Naive thymus-derived CD4-positive, alpha-beta T cell (primary cell): ENCODE measurements at regions of chr3 and their contacts with region 1.

Region 1: GRCh38 chr3:128617557-128618397 is 32.8 kb downstream of the RPN1 start:
- DNase-seq: peak; percentile 94 to 100 (median 99)
- ATAC-seq: peak; percentile 96
- H3K4me3 ChIP-seq: peak overlapping the region; percentile 99
- H3K4me3 Mint-ChIP-seq: peak overlapping the region; percentile 94 to 99 (median 97)
- H3K27ac ChIP-seq: peak overlapping the region; percentile 88
- H3K27ac Mint-ChIP-seq: peak overlapping the region; percentile 92 to 98 (median 97)
- H3K4me1 ChIP-seq: peaks cover 16 to 19% of the 10 kb centered on the region in 2 donors
- H3K4me1 Mint-ChIP-seq: peaks cover 10 to 36% (median 33%) of the 10 kb centered on the region in 7 donors
- H3K27me3 ChIP-seq: no peaks in the 10 kb centered on the region
- H3K27me3 Mint-ChIP-seq: no peaks in the 10 kb centered on the region

Region 2: DNA sequence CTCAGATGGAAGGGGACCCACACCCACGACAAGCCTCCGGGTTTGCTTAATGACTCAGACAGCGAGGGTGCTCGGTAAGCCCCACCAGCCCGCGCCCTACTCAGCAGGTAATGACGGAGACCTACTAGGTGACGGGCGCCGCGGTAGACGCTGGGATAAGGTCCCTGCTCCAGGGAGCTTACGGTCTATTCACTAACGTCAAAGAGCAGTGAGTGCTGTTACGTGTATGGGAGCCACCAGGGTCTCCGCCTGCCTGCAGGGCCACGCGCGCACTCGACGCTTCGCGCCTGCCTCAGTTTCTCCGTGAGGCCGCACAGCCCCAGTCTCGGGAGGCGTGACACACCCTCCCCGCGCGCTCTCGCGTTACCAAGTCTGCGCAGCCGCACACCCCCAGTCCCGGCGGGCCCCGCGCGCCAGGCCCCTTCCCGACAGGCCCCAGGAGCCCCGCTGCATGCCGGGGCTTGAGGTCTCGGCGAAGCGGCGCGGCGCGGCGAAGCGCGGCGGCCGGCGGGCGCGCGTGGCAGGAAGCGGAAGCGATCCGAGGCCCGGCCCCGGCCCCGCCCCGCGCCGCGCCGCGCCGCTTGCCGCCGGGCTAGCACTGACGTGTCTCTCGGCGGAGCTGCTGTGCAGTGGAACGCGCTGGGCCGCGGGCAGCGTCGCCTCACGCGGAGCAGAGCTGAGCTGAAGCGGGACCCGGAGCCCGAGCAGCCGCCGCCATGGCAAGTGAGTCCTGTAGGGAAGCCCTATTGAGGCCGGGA is 565.8 kb before region 1 on chr3 and contains the start of gene SEC61A1:
- CTCF ChIA-PET with region 1: no interaction called
- POLR2A ChIA-PET with region 1: no interaction called
- intact Hi-C with region 1: loop called in 1 of 2 experiments (anchors 1 kb)
- DNase-seq: peak; percentile 94 to 97 (median 95)
- ATAC-seq: peak; percentile 97
- H3K4me3 ChIP-seq: peak within 1 kb of the TSS; percentile 82
- H3K4me3 Mint-ChIP-seq: peak within 1 kb of the TSS; percentile 90 to 98 (median 96)
- H3K27ac ChIP-seq: peak within 1 kb of the TSS; percentile 95
- H3K27ac Mint-ChIP-seq: peak within 1 kb of the TSS; percentile 87 to 99 (median 97)
- H3K4me1 ChIP-seq: peaks cover 28 to 37% of the 10 kb centered on the region in 2 donors
- H3K4me1 Mint-ChIP-seq: peaks cover 36 to 44% (median 43%) of the 10 kb centered on the region in 7 donors
- H3K27me3 ChIP-seq: no peaks in the 10 kb centered on the region
- H3K27me3 Mint-ChIP-seq: peaks cover 0 to 17% (median 1%) of the 10 kb centered on the region in 5 donors
- total RNA-seq, gene SEC61A1: 110 to 219 (median 132) TPM

Region 3: DNA sequence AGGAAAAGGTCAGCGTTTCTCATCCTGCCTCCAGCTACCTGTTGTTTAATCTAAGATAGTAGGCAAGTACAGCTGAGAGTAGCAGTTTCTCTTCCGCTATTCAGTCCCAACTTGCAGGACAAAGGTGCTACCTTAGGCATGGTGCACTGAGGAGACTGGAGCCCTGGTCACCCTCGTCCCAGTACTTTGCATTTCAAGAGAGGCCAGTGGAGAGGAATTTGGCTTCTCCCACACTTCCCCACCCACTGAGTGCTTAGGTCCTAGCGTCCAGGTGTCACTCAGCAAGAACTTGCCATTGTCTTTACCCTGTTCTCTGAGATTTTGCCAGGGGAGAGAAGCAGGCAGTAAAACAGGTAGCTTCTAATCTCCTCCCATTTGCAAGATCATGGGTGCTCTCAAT is 45.4 kb after region 1 on chr3:
- CTCF ChIA-PET with region 1: no interaction called
- POLR2A ChIA-PET with region 1: no interaction called
- intact Hi-C with region 1: no loop called
- DNase-seq: no peak
- ATAC-seq: no peak
- H3K4me3 ChIP-seq: no peak overlapping the region
- H3K4me3 Mint-ChIP-seq: no peak overlapping the region
- H3K27ac ChIP-seq: no peak overlapping the region
- H3K27ac Mint-ChIP-seq: no peak overlapping the region
- H3K4me1 ChIP-seq: no peaks in the 10 kb centered on the region
- H3K4me1 Mint-ChIP-seq: peaks cover 0 to 4% (median 0%) of the 10 kb centered on the region in 7 donors
- H3K27me3 ChIP-seq: no peaks in the 10 kb centered on the region
- H3K27me3 Mint-ChIP-seq: peaks cover 0 to 35% (median 0%) of the 10 kb centered on the region in 5 donors

Region 4: GRCh38 chr3:128725932-128726690 is 108.3 kb after region 1 on chr3 and contains the start of gene RAB7A:
- CTCF ChIA-PET with region 1: no interaction called
- POLR2A ChIA-PET with region 1: no interaction called
- intact Hi-C with region 1: loop called (anchors 1 kb)
- DNase-seq: peak; percentile 92 to 97 (median 97)
- ATAC-seq: peak; percentile 98
- H3K4me3 ChIP-seq: peak within 1 kb of the TSS; percentile 57
- H3K4me3 Mint-ChIP-seq: peak within 1 kb of the TSS; percentile 89 to 98 (median 96)
- H3K27ac ChIP-seq: peak within 1 kb of the TSS; percentile 100
- H3K27ac Mint-ChIP-seq: peak within 1 kb of the TSS; percentile 92 to 98 (median 95)
- H3K4me1 ChIP-seq: peaks cover 32 to 38% of the 10 kb centered on the region in 2 donors
- H3K4me1 Mint-ChIP-seq: peaks cover 49 to 64% (median 60%) of the 10 kb centered on the region in 7 donors
- H3K27me3 ChIP-seq: no peaks in the 10 kb centered on the region
- H3K27me3 Mint-ChIP-seq: peaks cover 0 to 3% (median 0%) of the 10 kb centered on the region in 5 donors
- total RNA-seq, gene RAB7A: 124 to 249 (median 172) TPM

Region 5: GRCh38 chr3:128845778-128846485 is 228.2 kb after region 1 on chr3:
- CTCF ChIA-PET with region 1: interaction called, 4 read pairs
- POLR2A ChIA-PET with region 1: interaction called, 4 read pairs
- intact Hi-C with region 1: loop called (anchors 1 kb)
- DNase-seq: peak; percentile 61 to 87 (median 74)
- ATAC-seq: peak; percentile 85
- H3K4me3 ChIP-seq: peak overlapping the region; percentile 65
- H3K4me3 Mint-ChIP-seq: peak overlapping the region; percentile 65 to 88 (median 82)
- H3K27ac ChIP-seq: peak overlapping the region; percentile 64
- H3K27ac Mint-ChIP-seq: peak overlapping the region; percentile 64 to 93 (median 81)
- H3K4me1 ChIP-seq: peaks cover 0 to 14% of the 10 kb centered on the region in 2 donors
- H3K4me1 Mint-ChIP-seq: peaks cover 11 to 22% (median 17%) of the 10 kb centered on the region in 7 donors
- H3K27me3 ChIP-seq: no peaks in the 10 kb centered on the region
- H3K27me3 Mint-ChIP-seq: peaks cover 0 to 2% (median 0%) of the 10 kb centered on the region in 5 donors

Region 6: GRCh38 chr3:129026728-129027543 is 409.2 kb after region 1 on chr3:
- CTCF ChIA-PET with region 1: no interaction called
- POLR2A ChIA-PET with region 1: no interaction called
- intact Hi-C with region 1: loop called (anchors 1 to 5 kb)
- DNase-seq: peak; percentile 84 to 94 (median 93)
- ATAC-seq: peak; percentile 99
- H3K4me3 ChIP-seq: peak overlapping the region; percentile 67
- H3K4me3 Mint-ChIP-seq: peak overlapping the region; percentile 69 to 88 (median 86)
- H3K27ac ChIP-seq: peak overlapping the region; percentile 74
- H3K27ac Mint-ChIP-seq: peak overlapping the region; percentile 82 to 97 (median 93)
- H3K4me1 ChIP-seq: peaks cover 8 to 11% of the 10 kb centered on the region in 2 donors
- H3K4me1 Mint-ChIP-seq: peaks cover 13 to 31% (median 25%) of the 10 kb centered on the region in 7 donors
- H3K27me3 ChIP-seq: no peaks in the 10 kb centered on the region
- H3K27me3 Mint-ChIP-seq: peaks cover 0 to 3% (median 0%) of the 10 kb centered on the region in 5 donors

Region 7: DNA sequence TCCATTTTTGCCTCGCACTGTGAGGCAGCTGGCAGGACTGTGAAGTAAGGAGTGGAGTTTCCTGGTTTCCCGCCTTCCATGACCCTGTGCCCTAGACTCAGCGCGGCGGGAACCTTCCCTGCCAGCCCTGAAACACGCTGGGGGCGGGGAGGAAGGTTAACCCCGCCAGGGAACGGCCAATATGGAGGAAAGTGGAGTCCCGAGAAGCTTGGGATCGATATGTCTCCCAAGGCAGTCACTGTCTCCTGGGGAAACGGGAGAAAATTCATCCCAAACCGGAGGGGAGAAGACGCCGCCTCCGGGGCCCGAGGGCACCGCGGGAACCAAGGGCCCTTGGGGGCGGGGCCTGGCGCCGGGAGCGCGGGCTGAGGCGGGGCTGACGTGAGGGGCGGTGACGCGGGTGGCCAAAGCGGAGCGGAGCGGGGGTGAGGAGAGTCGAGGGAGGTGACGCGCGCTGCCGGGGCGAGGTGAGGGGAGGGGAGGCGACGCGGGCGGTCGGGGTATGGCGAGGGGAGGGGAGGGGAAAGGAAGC is 660.7 kb after region 1 on chr3 and contains the start of gene HMCES:
- CTCF ChIA-PET with region 1: no interaction called
- POLR2A ChIA-PET with region 1: no interaction called
- intact Hi-C with region 1: loop called in 1 of 2 experiments (anchors 1 kb)
- DNase-seq: peak; percentile 92 to 98 (median 95)
- ATAC-seq: peak; percentile 98
- H3K4me3 ChIP-seq: peak within 1 kb of the TSS; percentile 99
- H3K4me3 Mint-ChIP-seq: peak within 1 kb of the TSS; percentile 95 to 99 (median 98)
- H3K27ac ChIP-seq: peak within 1 kb of the TSS; percentile 99
- H3K27ac Mint-ChIP-seq: peak within 1 kb of the TSS; percentile 89 to 100 (median 98)
- H3K4me1 ChIP-seq: peaks cover 14 to 29% of the 10 kb centered on the region in 2 donors
- H3K4me1 Mint-ChIP-seq: peaks cover 21 to 50% (median 37%) of the 10 kb centered on the region in 7 donors
- H3K27me3 ChIP-seq: no peaks in the 10 kb centered on the region
- H3K27me3 Mint-ChIP-seq: no peaks in the 10 kb centered on the region
- total RNA-seq, gene HMCES: 45.7 to 56.4 (median 52.5) TPM